ENCODE measurements at regions of chr14 and their contacts with region 1.

Region 1: DNA sequence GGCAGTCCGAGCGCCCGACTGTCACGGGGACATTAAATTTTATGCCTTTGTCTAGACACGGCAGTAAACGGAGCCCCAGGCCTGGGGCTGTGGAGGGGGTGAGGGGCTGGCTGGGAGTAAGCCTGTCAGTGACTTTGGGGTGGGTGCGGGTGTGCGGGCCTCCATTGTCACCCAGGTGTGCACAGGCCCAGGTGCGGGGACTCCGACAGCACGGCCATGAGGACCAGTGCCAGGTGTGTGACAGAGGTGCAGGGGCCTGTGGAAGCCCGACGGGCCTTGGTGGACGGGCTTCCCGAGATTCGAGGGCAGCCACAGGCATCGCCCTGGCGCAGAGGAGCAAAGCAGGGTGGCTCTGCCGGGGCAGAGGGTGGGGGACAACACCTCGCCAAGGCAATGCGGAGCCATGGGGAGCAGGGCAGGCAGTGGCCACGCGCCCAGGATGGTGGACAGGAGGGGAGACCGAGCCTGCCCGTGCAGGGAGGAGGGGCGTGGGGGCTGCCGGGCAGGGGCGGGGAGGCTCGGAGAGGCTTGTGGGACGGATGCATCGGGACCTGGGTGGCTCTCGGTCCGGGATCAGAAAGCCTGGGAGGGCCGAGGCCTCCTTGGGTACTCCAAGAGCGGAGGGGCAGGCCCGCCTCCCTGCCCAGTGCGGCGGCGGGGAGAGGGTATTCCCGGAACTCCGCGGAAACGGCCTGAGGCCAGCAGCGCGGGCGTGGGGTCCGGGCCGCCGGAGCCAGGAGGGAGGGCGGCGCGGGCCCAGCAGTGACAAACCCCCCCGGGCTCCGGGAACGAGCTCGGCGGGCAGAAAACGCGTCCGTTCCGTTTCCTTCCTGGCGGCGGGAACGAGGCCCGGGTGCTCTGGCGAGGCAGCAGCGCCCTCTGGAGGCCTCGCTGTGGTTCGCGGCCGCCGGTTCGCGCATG is 1.5 kb downstream of the TMEM121 start:
- DNase-seq: peak; percentile 93
- CTCF ChIP-seq: peak; percentile 95

Region 2: GRCh38 chr14:105369653-105370040 is 158.3 kb before region 1 on chr14:
- CTCF ChIA-PET with region 1: interaction called, 38 read pairs
- POLR2A ChIA-PET with region 1: no interaction called
- DNase-seq: no peak
- CTCF ChIP-seq: no peak

Region 3: GRCh38 chr14:105375635-105376057 is 152.3 kb before region 1 on chr14:
- CTCF ChIA-PET with region 1: interaction called, 38 read pairs
- POLR2A ChIA-PET with region 1: no interaction called
- DNase-seq: no peak
- CTCF ChIP-seq: no peak

Region 4: DNA sequence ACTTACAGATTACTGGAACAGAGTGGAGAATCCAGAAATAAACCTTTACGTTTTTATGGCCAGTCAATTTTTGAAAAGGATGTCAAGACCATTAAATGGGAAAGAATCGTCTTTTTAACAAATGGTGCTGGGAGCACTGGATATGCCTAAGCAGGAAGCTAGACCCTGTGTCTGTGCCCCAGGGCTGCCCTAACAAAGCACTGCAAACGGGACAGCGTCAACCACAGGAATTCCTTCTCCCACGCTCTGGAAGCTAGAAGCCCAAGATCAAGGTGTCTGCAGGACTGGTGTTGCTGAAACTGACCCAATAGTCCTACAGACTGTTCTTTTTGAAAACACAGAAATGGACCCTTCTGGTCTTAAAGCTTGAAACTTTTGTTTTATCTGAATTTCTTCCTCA is 10.8 kb before region 1 on chr14:
- CTCF ChIA-PET with region 1: interaction called, 12 read pairs
- POLR2A ChIA-PET with region 1: no interaction called
- DNase-seq: no peak
- CTCF ChIP-seq: no peak

Measured in GM10248 (cell line).